Heart right ventricle (tissue), 16 donors: ENCODE measurements at regions of chr2 and their contacts with region 1.

Region 1: DNA sequence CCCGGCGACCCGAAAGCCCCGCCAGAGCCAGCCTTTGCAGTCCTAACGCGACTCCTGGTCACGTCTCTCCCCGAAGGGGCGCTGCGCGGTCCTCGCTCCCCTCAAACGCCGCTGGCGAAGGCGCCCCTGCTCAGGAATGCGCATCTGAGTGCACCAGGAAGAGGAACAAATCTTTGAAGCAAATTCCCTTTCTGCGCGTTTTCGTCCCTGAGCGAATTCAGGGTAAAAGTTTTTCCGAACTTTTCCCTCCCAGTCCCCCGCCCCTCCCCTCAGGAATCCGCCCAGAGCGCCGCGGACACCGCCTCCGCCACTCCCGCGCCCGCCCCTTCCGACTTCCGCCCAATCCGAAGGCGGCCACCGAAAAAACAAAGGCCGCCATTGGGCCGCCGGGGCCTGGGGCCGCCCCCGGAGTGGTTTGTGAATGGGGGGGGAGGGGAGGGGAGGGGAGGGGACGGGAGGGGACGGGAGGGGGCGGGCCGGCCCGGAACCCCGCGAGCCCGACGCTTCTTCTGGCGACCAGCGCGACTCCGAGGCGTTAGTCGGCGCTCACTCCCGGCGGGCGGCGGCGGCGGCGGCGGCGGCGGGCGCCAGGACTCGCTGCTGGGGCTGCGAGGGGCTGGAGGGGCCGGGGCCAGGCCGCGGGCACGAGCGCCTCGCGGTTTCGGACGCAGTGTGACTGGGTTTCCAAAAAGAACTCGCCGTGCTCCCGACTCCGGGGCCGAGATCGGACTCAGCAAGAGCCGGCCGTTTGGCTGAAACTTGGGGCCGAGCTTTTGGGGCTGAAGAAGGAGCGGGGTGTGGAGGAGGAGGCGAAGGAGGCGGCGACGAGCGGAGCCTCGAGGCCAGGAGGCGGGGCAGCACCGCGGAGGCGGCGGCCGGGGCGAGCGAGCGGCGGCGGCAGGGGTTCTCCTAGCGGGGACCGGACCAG is at the start of gene FZD7:
- DNase-seq: peak; percentile 93
- ATAC-seq: peak; percentile 86 to 95 (median 92)
- H3K4me3 ChIP-seq: peak within 1 kb of the TSS; percentile 43 to 87 (median 78)
- H3K27ac ChIP-seq: peak within 1 kb of the TSS; percentile 90 to 98 (median 94)
- H3K4me1 ChIP-seq: peaks cover 13 to 48% (median 32%) of the 10 kb centered on the region in 9 donors
- H3K27me3 ChIP-seq: peaks cover 0 to 73% (median 29%) of the 10 kb centered on the region in 7 donors
- CTCF ChIP-seq: peak in 2 of 9 donors; percentile 32
- total RNA-seq, gene FZD7: 9.4 to 51.1 (median 32.3) TPM

Region 2: GRCh38 chr2:201780674-201781581 is 252.7 kb before region 1 on chr2 and contains the start of gene ALS2:
- intact Hi-C with region 1: loop called in 1 of 10 experiments (anchors 10 kb)
- DNase-seq: peak; percentile 97 to 98
- ATAC-seq: peak; percentile 96 to 98 (median 98)
- H3K4me3 ChIP-seq: peak within 1 kb of the TSS; percentile 59 to 97 (median 93)
- H3K27ac ChIP-seq: peak within 1 kb of the TSS; percentile 78 to 94 (median 92)
- H3K4me1 ChIP-seq: peaks cover 0 to 50% (median 40%) of the 10 kb centered on the region in 9 donors
- H3K27me3 ChIP-seq: peaks cover 0 to 8% (median 0%) of the 10 kb centered on the region in 7 donors
- CTCF ChIP-seq: no peak
- total RNA-seq, gene ALS2: 26.1 to 49.3 (median 37.9) TPM

Region 3: DNA sequence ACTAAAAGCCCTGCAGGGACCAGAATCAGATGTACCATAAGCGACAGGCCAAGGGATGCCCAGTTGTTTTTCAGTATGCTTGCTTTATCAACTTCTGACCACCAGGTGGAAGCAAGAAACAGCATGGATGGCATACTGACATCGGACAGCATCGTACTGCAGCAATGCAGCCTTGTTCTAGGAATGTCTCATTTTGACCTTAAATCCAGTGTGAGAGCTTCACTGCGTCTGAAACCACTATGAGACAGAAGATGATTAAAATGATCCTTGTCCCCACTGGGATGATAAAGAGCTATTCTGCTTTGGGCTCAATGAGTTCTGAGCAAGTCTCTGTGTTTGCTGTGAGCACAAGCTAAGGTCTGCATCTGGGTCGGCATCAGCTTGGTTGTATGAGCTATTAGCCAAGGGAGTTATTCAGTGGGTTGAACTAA is 172.9 kb before region 1 on chr2:
- intact Hi-C with region 1: loop called in 6 of 10 experiments (anchors 5 to 10 kb)
- DNase-seq: peak in 1 of 2 donors; percentile 49
- ATAC-seq: peak; percentile 73 to 92 (median 88)
- H3K4me3 ChIP-seq: no peak overlapping the region
- H3K27ac ChIP-seq: no peak overlapping the region
- H3K4me1 ChIP-seq: peaks cover 0 to 6% (median 4%) of the 10 kb centered on the region in 9 donors
- H3K27me3 ChIP-seq: peaks cover 0 to 34% (median 17%) of the 10 kb centered on the region in 7 donors
- CTCF ChIP-seq: peak; percentile 50 to 89 (median 84)

Region 4: DNA sequence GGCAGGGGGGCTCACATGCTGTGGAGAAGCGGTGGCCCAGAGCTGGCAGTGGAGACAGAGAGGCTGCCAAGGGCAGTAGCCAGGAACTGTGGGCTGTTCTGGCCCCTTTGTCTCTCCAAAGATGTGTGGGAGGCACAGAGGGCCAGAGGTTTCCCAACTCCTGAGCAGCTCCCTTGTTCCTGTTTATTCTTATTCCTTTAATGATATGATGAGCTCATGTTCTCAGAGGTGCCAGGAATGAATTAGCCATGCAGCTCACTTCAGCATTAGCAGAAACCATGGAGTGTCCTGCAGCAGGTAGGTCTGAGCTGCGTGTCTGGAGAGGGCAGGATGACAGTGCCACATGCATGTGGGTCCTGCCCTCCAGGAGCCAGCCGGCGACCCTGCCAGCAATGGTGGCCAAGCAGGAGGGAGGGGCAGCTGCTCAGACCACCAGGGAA is 77.9 kb before region 1 on chr2:
- intact Hi-C with region 1: loop called in 1 of 10 experiments (anchors 10 kb)
- DNase-seq: no peak
- ATAC-seq: peak in 6 of 8 donors; percentile 17 to 67 (median 44)
- H3K4me3 ChIP-seq: no peak overlapping the region
- H3K27ac ChIP-seq: no peak overlapping the region
- H3K4me1 ChIP-seq: peaks cover 0 to 23% (median 9%) of the 10 kb centered on the region in 9 donors
- H3K27me3 ChIP-seq: peaks cover 0 to 4% (median 0%) of the 10 kb centered on the region in 7 donors
- CTCF ChIP-seq: no peak

Region 5: GRCh38 chr2:202178342-202178958 is 144.9 kb after region 1 on chr2:
- intact Hi-C with region 1: loop called in 6 of 10 experiments (anchors 5 to 10 kb)
- DNase-seq: peak in 1 of 2 donors; percentile 55
- ATAC-seq: peak in 7 of 8 donors; percentile 75 to 90 (median 83)
- H3K4me3 ChIP-seq: no peak overlapping the region
- H3K27ac ChIP-seq: no peak overlapping the region
- H3K4me1 ChIP-seq: no peaks in the 10 kb centered on the region
- H3K27me3 ChIP-seq: no peaks in the 10 kb centered on the region
- CTCF ChIP-seq: peak; percentile 54 to 92 (median 88)